GM12878 (cell line): ENCODE measurements at regions of chr5 and their contacts with region 1.

Region 1: DNA sequence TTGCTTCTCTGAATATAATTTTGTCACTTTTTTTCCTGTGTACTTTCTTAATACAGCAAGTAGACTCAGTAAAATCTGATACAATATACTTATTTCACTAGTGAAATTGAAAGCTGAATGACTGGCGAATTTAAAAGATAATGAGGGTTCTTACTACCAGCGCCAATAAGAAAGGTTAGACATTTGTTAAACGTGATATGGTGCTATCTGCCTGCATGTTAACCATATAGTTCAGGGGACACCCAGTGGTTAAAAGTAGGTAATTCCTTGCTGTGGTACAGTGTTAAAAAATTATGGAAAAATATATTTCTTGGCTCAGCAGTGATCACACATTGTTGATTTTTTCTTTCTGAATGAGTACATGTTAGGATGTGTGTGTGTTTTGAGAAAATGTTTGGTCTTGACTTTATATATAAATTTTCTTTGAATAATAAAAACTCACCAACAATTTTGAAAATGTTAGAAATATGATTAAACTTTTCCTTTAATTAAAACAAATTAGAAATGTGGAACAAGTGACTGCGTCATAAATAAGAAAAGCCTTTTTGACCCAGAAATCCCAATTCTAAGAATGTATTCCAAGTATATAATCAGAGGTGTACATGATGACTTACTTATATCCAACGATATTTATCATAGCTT is 25.8 kb downstream of the CAST start:
- DNase-seq: no peak
- ATAC-seq: peak; percentile 99
- H3K4me3 ChIP-seq: no peak overlapping the region
- H3K27ac ChIP-seq: no peak overlapping the region
- H3K4me1 ChIP-seq: no peaks in the 10 kb centered on the region
- H3K27me3 ChIP-seq: no peaks in the 10 kb centered on the region
- CTCF ChIP-seq: peak; percentile 55 to 65 (median 56)
- EP300 ChIP-seq: no peak
- POLR2A ChIP-seq: no peak
- RAD21 ChIP-seq: peak; percentile 79

Region 2: GRCh38 chr5:96624636-96625035 is 63.3 kb before region 1 on chr5:
- CTCF ChIA-PET with region 1: interaction called, 204 read pairs
- POLR2A ChIA-PET with region 1: no interaction called
- RAD21 ChIA-PET with region 1: interaction called, 3 read pairs
- SMC1A ChIA-PET with region 1: interaction called, 3 read pairs
- in situ Hi-C with region 1: loop called (anchors 5 kb)
- intact Hi-C with region 1: no loop called
- DNase-seq: no peak
- ATAC-seq: no peak
- H3K4me3 ChIP-seq: no peak overlapping the region
- H3K27ac ChIP-seq: no peak overlapping the region
- H3K4me1 ChIP-seq: no peaks in the 10 kb centered on the region
- H3K27me3 ChIP-seq: no peaks in the 10 kb centered on the region
- CTCF ChIP-seq: no peak
- EP300 ChIP-seq: no peak
- POLR2A ChIP-seq: no peak
- RAD21 ChIP-seq: no peak

Region 3: DNA sequence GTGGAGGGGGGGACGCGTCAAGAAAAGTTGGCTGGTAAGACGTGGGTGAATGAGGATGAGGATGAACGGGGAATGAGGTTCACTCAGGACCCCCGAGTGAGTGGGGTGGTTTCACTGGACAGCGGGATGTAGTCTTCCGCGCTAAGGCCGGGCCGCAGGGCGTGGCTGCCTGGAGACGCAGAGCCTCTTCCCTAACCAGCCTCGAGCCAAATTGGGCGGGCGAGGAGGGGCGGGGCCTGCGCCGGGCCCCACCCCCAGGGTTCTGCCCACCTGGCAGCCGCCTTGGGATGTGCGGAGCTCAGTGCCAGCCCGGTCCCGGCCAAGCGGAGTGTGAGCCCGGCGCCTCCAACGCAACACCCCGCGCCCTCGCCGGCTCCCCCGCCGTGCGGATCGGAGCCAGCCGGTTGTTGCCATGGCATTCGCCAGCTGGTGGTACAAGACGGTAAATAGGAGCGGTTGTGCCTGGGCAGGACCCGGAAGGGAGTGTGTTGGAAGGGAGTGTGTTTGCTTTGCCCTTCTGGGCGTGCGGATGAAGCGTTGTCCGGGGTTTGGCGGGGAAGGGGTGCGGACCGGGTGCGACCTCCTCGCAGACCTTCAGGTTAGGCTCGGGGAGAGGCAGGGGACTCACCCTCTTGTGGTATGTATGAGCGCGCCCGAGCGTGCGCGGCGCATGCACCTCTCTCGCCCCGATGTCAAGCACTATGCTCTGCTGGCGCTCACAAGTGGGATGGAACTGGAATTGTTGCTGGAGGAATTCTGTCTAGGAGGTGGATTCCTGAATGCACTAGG is 25.0 kb before region 1 on chr5:
- CTCF ChIA-PET with region 1: interaction called, 18 read pairs
- POLR2A ChIA-PET with region 1: interaction called, 9 read pairs
- RAD21 ChIA-PET with region 1: interaction called, 5 read pairs
- SMC1A ChIA-PET with region 1: interaction called, 6 read pairs
- in situ Hi-C with region 1: no loop called
- intact Hi-C with region 1: no loop called
- DNase-seq: peak; percentile 50
- ATAC-seq: peak; percentile 87
- H3K4me3 ChIP-seq: peak overlapping the region; percentile 75
- H3K27ac ChIP-seq: peak overlapping the region; percentile 70
- H3K4me1 ChIP-seq: peaks cover 6% of the 10 kb centered on the region
- H3K27me3 ChIP-seq: no peaks in the 10 kb centered on the region; a peak in 1 of 4 replicates
- CTCF ChIP-seq: no peak
- EP300 ChIP-seq: no peak
- POLR2A ChIP-seq: peak; percentile 71
- RAD21 ChIP-seq: no peak